ENCODE measurements at regions of chr19 and their contacts with region 1.

Region 1: GRCh38 chr19:35986664-35987570 is 8.1 kb upstream of the SDHAF1 start:
- DNase-seq: no peak
- H3K4me3 ChIP-seq: peak overlapping the region; percentile 46; the same call in 1 of the 2 replicates
- H3K27ac ChIP-seq: no peak overlapping the region
- H3K4me1 ChIP-seq: no peaks in the 10 kb centered on the region
- H3K27me3 ChIP-seq: peaks cover 69% of the 10 kb centered on the region
- CTCF ChIP-seq: no peak

Region 2: DNA sequence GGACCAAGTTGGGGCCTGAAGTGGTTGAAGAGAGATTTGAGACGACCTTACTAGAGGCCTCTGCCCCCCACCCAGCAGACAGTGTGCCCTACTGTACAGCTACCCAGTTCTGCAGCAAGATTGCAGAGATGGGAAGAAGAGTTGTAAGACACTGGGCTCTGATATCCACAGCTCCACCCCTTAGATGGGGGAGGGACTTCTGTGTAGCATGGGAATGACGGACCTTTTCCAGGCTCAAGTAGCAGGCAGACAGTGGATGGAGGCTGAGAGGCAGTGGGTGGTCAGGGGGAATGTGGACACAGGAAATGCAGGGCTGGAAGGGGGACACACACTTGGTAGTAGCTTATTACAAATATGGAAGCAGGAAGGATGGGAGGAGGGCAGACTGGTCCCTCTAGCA is 37.8 kb before region 1 on chr19:
- CTCF ChIA-PET with region 1: interaction called, 13 read pairs
- POLR2A ChIA-PET with region 1: no interaction called
- intact Hi-C with region 1: no loop called
- DNase-seq: no peak
- H3K4me3 ChIP-seq: no peak overlapping the region
- H3K27ac ChIP-seq: no peak overlapping the region
- H3K4me1 ChIP-seq: no peaks in the 10 kb centered on the region
- H3K27me3 ChIP-seq: peaks cover 21% of the 10 kb centered on the region
- CTCF ChIP-seq: no peak

Region 3: GRCh38 chr19:35963514-35963913 is 23.4 kb before region 1 on chr19:
- CTCF ChIA-PET with region 1: no interaction called
- POLR2A ChIA-PET with region 1: no interaction called
- intact Hi-C with region 1: no loop called
- DNase-seq: peak in 1 of 2 experiments; percentile 35
- H3K4me3 ChIP-seq: no peak overlapping the region
- H3K27ac ChIP-seq: no peak overlapping the region
- H3K4me1 ChIP-seq: no peaks in the 10 kb centered on the region
- H3K27me3 ChIP-seq: peaks cover 40% of the 10 kb centered on the region
- CTCF ChIP-seq: no peak

Region 4: DNA sequence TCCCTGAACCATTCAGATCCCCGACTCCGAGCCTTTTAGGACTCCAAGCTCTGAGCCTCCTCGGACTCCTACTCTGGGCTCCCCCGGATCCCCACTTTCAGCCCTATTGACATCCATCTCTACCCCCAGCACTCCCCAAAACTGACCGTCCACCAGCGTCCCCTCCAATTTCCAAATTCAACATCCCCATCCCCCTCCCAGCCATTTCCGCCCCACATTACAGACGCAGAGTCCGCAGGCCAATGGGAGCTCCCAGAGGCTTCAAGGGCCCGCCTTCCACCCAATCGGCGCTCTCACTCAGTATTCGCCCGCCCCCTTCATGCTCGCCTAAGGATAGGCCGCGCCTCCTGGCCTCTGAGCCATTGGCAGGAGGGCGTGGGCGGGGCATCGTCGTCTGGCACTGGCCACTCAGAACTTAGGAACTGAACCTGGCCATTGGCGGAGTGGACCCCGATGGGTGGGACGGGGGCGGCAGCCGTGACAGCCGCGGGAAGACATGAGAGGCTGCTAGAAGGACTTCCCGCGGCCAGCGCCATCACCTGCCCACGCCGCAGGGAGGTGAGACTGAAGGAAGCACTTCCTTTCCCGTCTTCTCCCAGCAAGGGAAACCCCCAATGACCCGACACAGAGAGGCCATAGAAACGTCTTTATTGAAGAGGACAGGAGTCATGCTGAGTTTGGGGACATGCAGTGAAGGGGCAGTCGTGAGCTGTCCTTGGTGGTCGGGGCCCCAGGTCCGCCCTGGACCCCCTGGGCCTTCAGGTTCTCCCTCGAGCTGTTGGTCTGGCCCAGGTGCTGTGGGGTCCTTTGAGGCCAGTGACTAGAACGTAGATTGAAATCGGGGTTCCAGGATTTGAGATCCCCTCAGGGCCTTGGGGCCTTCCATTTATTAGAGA is 27.4 kb after region 1 on chr19 and contains the start of gene ALKBH6:
- CTCF ChIA-PET with region 1: interaction called, 11 read pairs
- POLR2A ChIA-PET with region 1: no interaction called
- intact Hi-C with region 1: no loop called
- DNase-seq: peak; percentile 98 to 99
- H3K4me3 ChIP-seq: peak within 1 kb of the TSS; percentile 70
- H3K27ac ChIP-seq: no peak within 1 kb of the TSS
- H3K4me1 ChIP-seq: peaks cover 7% of the 10 kb centered on the region
- H3K27me3 ChIP-seq: no peaks in the 10 kb centered on the region
- CTCF ChIP-seq: no peak
- total RNA-seq, gene ALKBH6: 48.2 and 55.1 TPM in 2 replicates

Region 5: GRCh38 chr19:37342753-37343152 is 1355.8 kb after region 1 on chr19:
- CTCF ChIA-PET with region 1: interaction called, 10 read pairs
- POLR2A ChIA-PET with region 1: no interaction called
- intact Hi-C with region 1: no loop called
- DNase-seq: no peak
- H3K4me3 ChIP-seq: no peak overlapping the region
- H3K27ac ChIP-seq: no peak overlapping the region
- H3K4me1 ChIP-seq: no peaks in the 10 kb centered on the region
- H3K27me3 ChIP-seq: no peaks in the 10 kb centered on the region
- CTCF ChIP-seq: no peak

Measured in PC-9 (cell line).